Posterior vena cava (tissue), 2 donors: ENCODE measurements at regions of chr12 and their contacts with region 1.

Region 1: GRCh38 chr12:123404581-123404980 is 20.6 kb downstream of the KMT5A start:
- DNase-seq: no peak

Region 2: GRCh38 chr12:123354600-123354999 is 50.0 kb before region 1 on chr12:
- intact Hi-C with region 1: loop called in 1 of 2 experiments (anchors 2 kb)
- DNase-seq: no peak